CD4-positive, alpha-beta memory T cell (primary cell): ENCODE measurements at regions of chr18 and their contacts with region 1.

Region 1: DNA sequence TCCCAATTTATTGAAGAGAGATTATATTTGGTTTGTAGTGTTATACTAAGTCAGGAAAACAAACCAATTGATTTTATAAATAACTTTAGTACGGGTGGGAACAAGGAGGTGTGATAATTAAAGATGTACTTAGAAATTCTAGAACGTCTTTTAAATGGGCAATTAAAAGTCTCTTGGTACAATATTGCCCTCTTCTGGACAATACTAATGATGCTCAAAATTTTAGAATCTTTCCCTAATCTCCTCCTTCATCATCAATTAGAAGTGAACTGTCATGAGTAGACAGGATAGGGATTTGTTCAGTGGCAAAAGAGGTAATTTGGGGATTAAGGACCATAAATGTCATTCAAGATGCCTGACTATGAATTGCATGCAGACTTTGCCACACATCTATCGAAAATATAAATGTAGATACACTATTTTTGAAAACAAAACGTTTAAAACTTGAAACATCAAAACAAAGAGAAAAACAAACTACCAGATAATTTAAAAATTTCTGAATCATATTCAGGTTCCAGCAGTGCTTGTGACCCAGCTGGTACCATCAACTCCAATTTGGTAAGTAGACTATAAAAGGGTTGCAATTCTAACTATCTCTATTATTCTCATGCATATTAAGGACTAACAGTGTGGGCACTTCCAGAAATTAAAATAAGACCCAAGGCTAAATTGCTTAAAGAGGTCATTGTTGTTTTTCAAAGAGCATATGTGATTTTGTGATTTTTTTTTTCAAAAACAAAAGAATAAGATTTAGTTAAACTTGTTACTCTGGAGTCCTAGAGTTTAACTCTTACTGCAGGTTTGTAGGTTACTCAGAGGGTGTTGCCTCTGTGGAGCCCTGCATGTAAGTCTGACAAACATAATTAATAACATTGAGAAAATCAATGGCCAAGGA is 123.5 kb downstream of the LAMA3 start:
- DNase-seq: peak in 4 of 5 donors; percentile 28 to 39 (median 32)
- H3K4me3 ChIP-seq: no peak overlapping the region
- H3K4me3 Mint-ChIP-seq: no peak overlapping the region
- H3K27ac ChIP-seq: no peak overlapping the region
- H3K27ac Mint-ChIP-seq: no peak overlapping the region
- H3K4me1 ChIP-seq: peaks cover 13% of the 10 kb centered on the region
- H3K4me1 Mint-ChIP-seq: peaks cover 2 to 16% (median 12%) of the 10 kb centered on the region in 4 donors
- H3K27me3 ChIP-seq: no peaks in the 10 kb centered on the region
- H3K27me3 Mint-ChIP-seq: no peaks in the 10 kb centered on the region

Region 2: DNA sequence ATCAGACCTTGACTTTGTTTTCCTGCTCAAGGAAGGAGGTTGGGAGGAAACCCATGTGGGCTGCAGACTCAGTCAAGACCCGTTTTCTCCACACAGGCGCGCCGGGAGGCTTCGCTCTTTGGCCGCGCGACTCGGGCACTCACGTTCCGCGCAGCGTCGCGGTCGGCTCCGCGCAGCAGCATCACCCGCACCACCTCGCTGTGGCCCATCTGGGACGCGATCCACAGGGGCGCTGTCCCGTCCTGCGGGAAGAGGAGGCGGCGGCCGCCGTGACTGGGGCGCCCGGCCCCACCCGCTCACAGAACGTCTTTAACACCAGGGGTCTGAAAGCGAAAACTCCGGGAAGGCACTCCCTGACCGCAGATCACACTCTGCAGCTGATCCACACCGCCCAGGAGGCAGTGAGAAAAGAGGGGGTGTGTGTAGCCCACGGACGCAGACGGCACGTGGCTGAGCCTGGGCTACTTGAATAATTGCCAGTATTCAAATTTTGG is 193.4 kb before region 1 on chr18:
- CTCF ChIA-PET with region 1: interaction called, 35 read pairs
- POLR2A ChIA-PET with region 1: interaction called, 3 read pairs
- intact Hi-C with region 1: loop called (anchors 1 kb)
- DNase-seq: peak in 3 of 5 donors; percentile 5 to 6 (median 5)
- H3K4me3 ChIP-seq: peak overlapping the region in 1 of 2 donors; percentile 3
- H3K4me3 Mint-ChIP-seq: peak overlapping the region; percentile 46 to 81 (median 70)
- H3K27ac ChIP-seq: no peak overlapping the region
- H3K27ac Mint-ChIP-seq: peak overlapping the region in 1 of 7 donors; percentile 1
- H3K4me1 ChIP-seq: peaks cover 11% of the 10 kb centered on the region
- H3K4me1 Mint-ChIP-seq: peaks cover 0 to 7% (median 3%) of the 10 kb centered on the region in 4 donors
- H3K27me3 ChIP-seq: peaks cover 31% of the 10 kb centered on the region
- H3K27me3 Mint-ChIP-seq: peaks cover 34 to 36% of the 10 kb centered on the region in 2 donors

Region 3: GRCh38 chr18:23861805-23862470 is 49.1 kb after region 1 on chr18:
- CTCF ChIA-PET with region 1: interaction called, 5 read pairs
- POLR2A ChIA-PET with region 1: no interaction called
- intact Hi-C with region 1: loop called (anchors 5 kb)
- DNase-seq: no peak
- H3K4me3 ChIP-seq: no peak overlapping the region
- H3K4me3 Mint-ChIP-seq: no peak overlapping the region
- H3K27ac ChIP-seq: no peak overlapping the region
- H3K27ac Mint-ChIP-seq: peak overlapping the region; percentile 13 to 80 (median 65)
- H3K4me1 ChIP-seq: peaks cover 35% of the 10 kb centered on the region
- H3K4me1 Mint-ChIP-seq: peaks cover 27 to 55% (median 36%) of the 10 kb centered on the region in 4 donors
- H3K27me3 ChIP-seq: no peaks in the 10 kb centered on the region
- H3K27me3 Mint-ChIP-seq: no peaks in the 10 kb centered on the region

Region 4: DNA sequence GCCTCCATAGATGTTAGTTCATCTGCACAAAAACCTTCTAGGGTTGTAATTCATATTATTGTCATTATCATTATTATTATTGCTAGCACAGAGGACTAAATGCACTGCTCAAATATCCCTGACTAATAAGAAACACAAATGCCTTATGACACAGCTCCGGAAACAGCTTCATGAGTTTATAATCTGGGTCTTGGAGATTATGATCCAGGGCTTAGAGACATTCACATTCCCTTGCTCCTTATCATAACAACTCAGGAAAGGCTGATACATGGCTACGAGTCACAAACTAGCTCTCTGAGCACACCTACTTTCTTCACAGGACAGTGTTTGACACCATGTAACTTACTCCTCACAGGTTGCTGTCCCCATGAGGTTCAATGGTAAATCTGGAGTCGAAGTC is 99.6 kb after region 1 on chr18:
- CTCF ChIA-PET with region 1: no interaction called
- POLR2A ChIA-PET with region 1: no interaction called
- intact Hi-C with region 1: no loop called
- DNase-seq: no peak
- H3K4me3 ChIP-seq: no peak overlapping the region
- H3K4me3 Mint-ChIP-seq: no peak overlapping the region
- H3K27ac ChIP-seq: no peak overlapping the region
- H3K27ac Mint-ChIP-seq: no peak overlapping the region
- H3K4me1 ChIP-seq: no peaks in the 10 kb centered on the region
- H3K4me1 Mint-ChIP-seq: peaks cover 0 to under 1% (median 0%) of the 10 kb centered on the region in 4 donors
- H3K27me3 ChIP-seq: no peaks in the 10 kb centered on the region
- H3K27me3 Mint-ChIP-seq: no peaks in the 10 kb centered on the region